ENCODE measurements at regions of chr12 and their contacts with region 1.

Region 1: GRCh38 chr12:112382232-112382796 is at the start of gene HECTD4:
- DNase-seq: peak; percentile 99
- H3K4me3 Mint-ChIP-seq: peak within 1 kb of the TSS; percentile 96
- H3K27ac Mint-ChIP-seq: peak within 1 kb of the TSS; percentile 94
- H3K4me1 Mint-ChIP-seq: peaks cover 16% of the 10 kb centered on the region
- H3K27me3 Mint-ChIP-seq: no peaks in the 10 kb centered on the region
- CTCF ChIP-seq: no peak
- total RNA-seq, gene HECTD4: 65.7 and 70.2 TPM in 2 replicates

Region 2: GRCh38 chr12:111942557-111942956 is 439.8 kb before region 1 on chr12:
- CTCF ChIA-PET with region 1: no interaction called
- intact Hi-C with region 1: loop called (anchors 10 kb)
- DNase-seq: peak; percentile 60
- H3K4me3 Mint-ChIP-seq: no peak overlapping the region
- H3K27ac Mint-ChIP-seq: peak overlapping the region; percentile 25
- H3K4me1 Mint-ChIP-seq: peaks cover 9% of the 10 kb centered on the region
- H3K27me3 Mint-ChIP-seq: no peaks in the 10 kb centered on the region
- CTCF ChIP-seq: no peak

Region 3: DNA sequence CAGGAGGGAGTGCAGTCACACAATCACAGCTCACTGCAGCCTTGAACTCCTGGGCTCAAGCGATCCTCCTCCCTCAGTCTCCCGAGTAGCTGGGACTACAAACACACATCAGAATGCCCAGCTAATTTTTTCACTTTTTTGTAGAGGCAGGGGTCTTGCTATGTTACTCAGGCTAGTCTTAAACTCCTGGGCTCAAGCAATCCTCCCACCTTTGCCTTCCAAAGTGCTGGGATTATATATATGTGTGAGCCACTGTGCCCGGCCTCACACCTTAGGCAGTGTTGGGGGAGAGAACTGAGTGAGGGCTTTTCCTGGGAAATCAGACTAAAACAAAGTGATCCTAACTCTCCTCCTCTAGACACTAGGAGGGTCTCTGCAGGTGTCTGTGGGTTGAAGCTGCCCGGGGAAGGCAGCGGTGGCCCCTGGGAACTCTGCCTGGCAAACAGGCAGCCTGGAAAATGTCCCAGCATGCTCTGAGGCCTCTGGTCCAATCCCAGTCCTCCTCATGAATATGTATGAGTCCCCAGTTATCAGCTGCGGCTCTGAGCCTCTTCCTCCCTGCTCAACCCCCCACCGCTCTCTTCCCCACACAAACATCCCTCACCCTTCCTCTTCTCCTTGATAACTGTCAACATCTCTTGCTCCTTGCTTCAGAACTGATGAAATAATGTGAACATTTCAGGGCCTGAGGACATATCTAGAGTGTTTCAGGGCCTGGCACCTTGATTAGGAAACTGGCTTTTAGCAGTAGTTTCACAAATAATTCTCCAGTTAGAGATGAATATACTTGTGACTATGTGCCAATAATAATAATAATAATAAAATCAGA is 265.9 kb before region 1 on chr12:
- CTCF ChIA-PET with region 1: no interaction called
- intact Hi-C with region 1: loop called (anchors 10 kb)
- DNase-seq: peak; percentile 41
- H3K4me3 Mint-ChIP-seq: no peak overlapping the region
- H3K27ac Mint-ChIP-seq: peak overlapping the region; percentile 73
- H3K4me1 Mint-ChIP-seq: peaks cover 35% of the 10 kb centered on the region
- H3K27me3 Mint-ChIP-seq: no peaks in the 10 kb centered on the region
- CTCF ChIP-seq: no peak

Region 4: GRCh38 chr12:112198120-112198733 is 184.1 kb before region 1 on chr12:
- CTCF ChIA-PET with region 1: interaction called, 36 read pairs
- intact Hi-C with region 1: loop called (anchors 1 kb)
- DNase-seq: peak; percentile 74
- H3K4me3 Mint-ChIP-seq: no peak overlapping the region
- H3K27ac Mint-ChIP-seq: no peak overlapping the region
- H3K4me1 Mint-ChIP-seq: no peaks in the 10 kb centered on the region
- H3K27me3 Mint-ChIP-seq: no peaks in the 10 kb centered on the region
- CTCF ChIP-seq: peak; percentile 58

Region 5: DNA sequence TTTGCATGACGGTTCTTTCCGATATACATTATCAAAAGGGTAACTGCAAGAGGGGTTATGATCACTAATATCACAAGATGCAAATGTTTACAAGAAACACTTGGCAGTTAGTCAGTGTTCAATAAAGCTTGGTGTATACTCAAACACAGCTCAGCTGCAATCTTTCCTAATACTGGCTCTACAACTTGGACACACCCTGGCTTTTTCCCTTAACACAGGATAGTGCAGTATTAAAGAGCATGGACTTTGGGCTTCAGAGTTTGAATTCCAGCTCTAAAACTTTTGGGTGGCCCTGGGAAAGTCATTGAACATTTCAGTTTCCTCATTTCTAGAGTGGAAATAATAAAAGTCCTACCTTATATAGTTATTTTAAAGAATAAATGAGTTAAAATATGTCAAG is 107.1 kb before region 1 on chr12:
- CTCF ChIA-PET with region 1: no interaction called
- intact Hi-C with region 1: loop called (anchors 5 kb)
- DNase-seq: no peak
- H3K4me3 Mint-ChIP-seq: no peak overlapping the region
- H3K27ac Mint-ChIP-seq: no peak overlapping the region
- H3K4me1 Mint-ChIP-seq: no peaks in the 10 kb centered on the region
- H3K27me3 Mint-ChIP-seq: no peaks in the 10 kb centered on the region
- CTCF ChIP-seq: no peak